ENCODE measurements at regions of chr4 and their contacts with region 1.

Region 1: DNA sequence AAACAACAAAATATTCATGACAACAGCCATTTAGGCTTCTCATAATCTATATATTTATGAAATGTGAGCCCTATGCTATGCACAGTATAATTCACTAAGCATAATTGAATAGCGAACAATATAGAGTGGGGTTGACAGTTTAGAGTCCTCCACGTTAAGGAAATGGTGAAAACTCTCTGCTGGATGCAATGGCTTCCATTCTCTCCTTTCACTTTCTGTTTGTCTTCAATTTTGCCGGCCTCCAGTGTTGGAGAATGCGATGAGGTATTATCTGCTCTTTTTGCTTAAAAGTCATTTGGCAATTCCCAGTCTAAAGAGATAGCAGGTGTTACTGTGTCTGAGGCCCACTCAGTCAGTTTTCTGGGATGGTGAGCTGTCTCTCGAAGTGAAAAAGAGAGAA is 52.1 kb downstream of the NPY5R start:
- DNase-seq: no peak
- H3K4me3 ChIP-seq: no peak overlapping the region
- H3K27ac ChIP-seq: no peak overlapping the region
- H3K4me1 ChIP-seq: no peaks in the 10 kb centered on the region
- H3K27me3 ChIP-seq: no peaks in the 10 kb centered on the region
- CTCF ChIP-seq: no peak
- EP300 ChIP-seq: no peak
- POLR2A ChIP-seq: no peak

Region 2: DNA sequence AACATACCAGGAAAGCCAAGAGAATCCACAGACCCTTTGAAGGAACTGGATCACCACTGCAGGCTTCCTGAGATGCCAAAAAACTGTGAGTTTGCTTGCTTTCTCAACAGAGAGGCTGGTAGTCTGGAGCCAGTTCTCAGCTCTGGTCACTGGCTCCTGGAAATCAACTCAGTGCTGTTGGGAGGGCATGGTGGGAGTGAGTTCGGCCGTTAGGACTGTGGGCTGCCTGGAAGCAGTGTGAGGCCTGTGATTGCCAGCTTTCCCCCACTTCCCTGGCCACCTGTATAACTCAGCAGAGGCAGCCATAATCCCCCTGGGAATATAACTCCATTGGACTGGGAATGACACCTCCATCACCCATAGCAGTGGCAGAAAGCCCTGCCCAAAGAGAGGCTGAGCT is 1110.0 kb before region 1 on chr4:
- in situ Hi-C with region 1: no loop called
- intact Hi-C with region 1: loop called (anchors 10 kb)
- DNase-seq: no peak
- H3K4me3 ChIP-seq: no peak overlapping the region
- H3K27ac ChIP-seq: no peak overlapping the region
- H3K4me1 ChIP-seq: no peaks in the 10 kb centered on the region
- H3K27me3 ChIP-seq: no peaks in the 10 kb centered on the region
- CTCF ChIP-seq: no peak
- EP300 ChIP-seq: no peak
- POLR2A ChIP-seq: no peak

Region 3: DNA sequence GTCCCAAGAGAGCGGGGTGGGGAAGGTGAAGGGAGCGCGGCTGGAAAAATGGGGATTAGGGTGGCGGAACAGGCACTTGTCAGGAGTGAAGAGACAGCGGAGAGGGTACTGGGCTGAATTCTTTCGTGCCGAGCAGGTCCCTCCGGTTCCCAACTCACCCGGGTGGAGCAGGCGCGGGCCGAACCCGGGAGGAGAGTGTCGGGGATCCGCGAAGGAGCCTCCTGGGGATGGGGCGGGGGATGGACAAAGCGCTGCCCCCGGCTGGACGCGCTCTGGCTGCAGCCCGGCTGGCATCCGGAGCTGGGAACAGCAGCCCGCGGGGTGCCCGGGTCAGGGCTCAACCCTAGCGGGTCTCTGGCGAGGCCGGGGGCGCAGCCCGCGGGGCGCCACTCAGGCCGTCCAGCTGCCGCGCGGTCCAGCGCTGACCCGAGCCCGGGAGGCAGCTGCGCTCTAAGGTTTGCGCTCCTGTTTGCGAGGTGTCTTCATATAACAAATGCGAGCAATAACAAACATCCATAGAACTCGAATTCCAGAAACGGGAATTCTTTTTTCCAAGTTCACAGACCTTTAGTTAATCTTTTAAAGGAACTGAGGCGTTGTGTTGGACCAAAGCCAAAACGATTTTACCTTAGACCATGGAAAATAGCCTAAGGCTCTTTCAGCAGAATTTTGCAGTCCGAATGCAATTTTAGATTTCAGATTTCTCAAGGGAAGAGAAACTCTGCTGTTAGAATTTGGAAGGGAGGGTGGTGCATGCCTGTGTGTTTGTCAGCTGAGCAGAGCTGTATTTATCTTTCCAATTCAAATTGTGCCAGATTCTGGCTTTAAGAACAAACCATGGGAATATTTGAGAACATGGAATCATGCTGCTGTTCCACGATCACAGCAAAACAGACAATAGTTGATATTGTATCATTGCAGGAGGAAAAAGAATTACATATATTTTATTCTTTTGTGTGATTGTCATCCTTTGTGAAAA is 51.3 kb before region 1 on chr4:
- in situ Hi-C with region 1: no loop called
- intact Hi-C with region 1: no loop called
- DNase-seq: no peak
- H3K4me3 ChIP-seq: peak overlapping the region; percentile 8 to 63 (median 38)
- H3K27ac ChIP-seq: peak overlapping the region in 1 of 4 donors; percentile 47
- H3K4me1 ChIP-seq: peaks cover 0 to 22% (median 14%) of the 10 kb centered on the region in 4 donors
- H3K27me3 ChIP-seq: peaks cover 61% of the 10 kb centered on the region
- CTCF ChIP-seq: no peak
- EP300 ChIP-seq: no peak
- POLR2A ChIP-seq: no peak